Naive thymus-derived CD4-positive, alpha-beta T cell (primary cell): ENCODE measurements at regions of chr15 and their contacts with region 1.

Region 1: GRCh38 chr15:83248151-83249029 is 36.1 kb downstream of the BNC1 start:
- DNase-seq: peak in 7 of 9 donors; percentile 2 to 59 (median 38)
- ATAC-seq: peak; percentile 52
- H3K4me3 ChIP-seq: no peak overlapping the region
- H3K4me3 Mint-ChIP-seq: no peak overlapping the region
- H3K27ac ChIP-seq: no peak overlapping the region
- H3K27ac Mint-ChIP-seq: no peak overlapping the region
- H3K4me1 ChIP-seq: no peaks in the 10 kb centered on the region
- H3K4me1 Mint-ChIP-seq: no peaks in the 10 kb centered on the region
- H3K27me3 ChIP-seq: peaks cover 0 to 10% of the 10 kb centered on the region in 2 donors
- H3K27me3 Mint-ChIP-seq: peaks cover 36 to 67% (median 50%) of the 10 kb centered on the region in 5 donors

Region 2: DNA sequence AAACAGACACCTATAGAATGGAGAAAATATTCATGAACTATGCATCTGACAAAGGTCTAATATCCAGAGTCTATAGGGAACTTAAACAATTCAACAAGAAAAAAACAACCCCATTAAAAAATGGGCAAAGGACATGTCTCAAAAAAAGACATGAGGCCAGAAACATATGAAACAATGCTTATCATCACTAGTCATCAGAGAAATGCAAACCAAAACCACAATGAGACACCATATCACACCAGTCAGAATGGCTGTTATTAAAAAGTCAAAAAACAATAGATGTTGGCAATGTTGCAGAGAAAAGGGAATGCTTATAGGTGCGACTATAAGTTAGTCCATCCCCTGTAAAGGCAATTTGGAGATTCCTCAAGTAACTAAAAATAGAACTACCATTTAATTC is 29.4 kb before region 1 on chr15:
- CTCF ChIA-PET with region 1: no interaction called
- POLR2A ChIA-PET with region 1: no interaction called
- intact Hi-C with region 1: no loop called
- DNase-seq: no peak
- ATAC-seq: no peak
- H3K4me3 ChIP-seq: no peak overlapping the region
- H3K4me3 Mint-ChIP-seq: no peak overlapping the region
- H3K27ac ChIP-seq: no peak overlapping the region
- H3K27ac Mint-ChIP-seq: no peak overlapping the region
- H3K4me1 ChIP-seq: no peaks in the 10 kb centered on the region
- H3K4me1 Mint-ChIP-seq: peaks cover 0 to 9% (median 0%) of the 10 kb centered on the region in 7 donors
- H3K27me3 ChIP-seq: no peaks in the 10 kb centered on the region
- H3K27me3 Mint-ChIP-seq: peaks cover 36 to 66% (median 38%) of the 10 kb centered on the region in 5 donors

Region 3: DNA sequence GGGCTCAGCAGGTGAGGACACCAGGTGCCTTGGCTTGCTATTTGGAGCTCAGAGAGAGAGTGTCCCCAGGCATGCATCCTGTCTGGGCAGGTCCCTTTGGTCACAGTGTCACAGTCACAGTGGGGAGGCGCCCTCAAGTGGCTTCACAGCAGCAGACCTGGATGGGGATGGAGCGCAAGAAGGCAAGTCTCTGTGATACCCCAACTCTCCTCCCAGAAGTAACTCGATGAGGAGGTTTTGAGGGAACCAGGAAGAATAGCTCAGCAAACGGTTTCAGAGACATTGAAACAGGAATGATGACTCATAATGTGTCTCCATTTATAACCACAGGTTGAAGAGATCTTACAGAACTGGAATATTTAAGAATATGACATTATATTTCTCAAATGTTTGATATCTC is 132.3 kb after region 1 on chr15:
- CTCF ChIA-PET with region 1: no interaction called
- POLR2A ChIA-PET with region 1: no interaction called
- intact Hi-C with region 1: loop called in 1 of 2 experiments (anchors 1 kb)
- DNase-seq: peak in 2 of 9 donors; percentile 16 to 33
- ATAC-seq: peak; percentile 46
- H3K4me3 ChIP-seq: no peak overlapping the region
- H3K4me3 Mint-ChIP-seq: no peak overlapping the region
- H3K27ac ChIP-seq: no peak overlapping the region
- H3K27ac Mint-ChIP-seq: no peak overlapping the region
- H3K4me1 ChIP-seq: no peaks in the 10 kb centered on the region
- H3K4me1 Mint-ChIP-seq: peaks cover 0 to 6% (median 0%) of the 10 kb centered on the region in 7 donors
- H3K27me3 ChIP-seq: no peaks in the 10 kb centered on the region
- H3K27me3 Mint-ChIP-seq: peaks cover 37 to 55% (median 47%) of the 10 kb centered on the region in 5 donors

Region 4: GRCh38 chr15:83559310-83559966 is 311.0 kb after region 1 on chr15:
- CTCF ChIA-PET with region 1: no interaction called
- POLR2A ChIA-PET with region 1: no interaction called
- intact Hi-C with region 1: loop called (anchors 2 kb)
- DNase-seq: peak in 8 of 9 donors; percentile 6 to 43 (median 26)
- ATAC-seq: peak; percentile 65
- H3K4me3 ChIP-seq: no peak overlapping the region
- H3K4me3 Mint-ChIP-seq: no peak overlapping the region
- H3K27ac ChIP-seq: no peak overlapping the region
- H3K27ac Mint-ChIP-seq: no peak overlapping the region
- H3K4me1 ChIP-seq: no peaks in the 10 kb centered on the region
- H3K4me1 Mint-ChIP-seq: no peaks in the 10 kb centered on the region
- H3K27me3 ChIP-seq: no peaks in the 10 kb centered on the region
- H3K27me3 Mint-ChIP-seq: peaks cover 3 to 32% (median 18%) of the 10 kb centered on the region in 5 donors

Region 5: GRCh38 chr15:83571820-83572707 is 323.7 kb after region 1 on chr15:
- CTCF ChIA-PET with region 1: no interaction called
- POLR2A ChIA-PET with region 1: no interaction called
- intact Hi-C with region 1: loop called in 1 of 2 experiments (anchors 5 kb)
- DNase-seq: peak in 1 of 9 donors; percentile 2
- ATAC-seq: no peak
- H3K4me3 ChIP-seq: no peak overlapping the region
- H3K4me3 Mint-ChIP-seq: no peak overlapping the region
- H3K27ac ChIP-seq: no peak overlapping the region
- H3K27ac Mint-ChIP-seq: no peak overlapping the region
- H3K4me1 ChIP-seq: no peaks in the 10 kb centered on the region
- H3K4me1 Mint-ChIP-seq: no peaks in the 10 kb centered on the region
- H3K27me3 ChIP-seq: peaks cover 0 to 4% of the 10 kb centered on the region in 2 donors
- H3K27me3 Mint-ChIP-seq: peaks cover 0 to 17% (median 0%) of the 10 kb centered on the region in 5 donors